ENCODE measurements at regions of chr9 and their contacts with region 1.

Region 1: GRCh38 chr9:27618066-27618465 is 44.8 kb upstream of the C9orf72 start:
- DNase-seq: no peak
- ATAC-seq: no peak
- H3K4me3 ChIP-seq: no peak overlapping the region
- H3K4me3 Mint-ChIP-seq: no peak overlapping the region
- H3K27ac ChIP-seq: no peak overlapping the region
- H3K27ac Mint-ChIP-seq: no peak overlapping the region
- H3K4me1 ChIP-seq: no peaks in the 10 kb centered on the region
- H3K4me1 Mint-ChIP-seq: no peaks in the 10 kb centered on the region
- H3K27me3 ChIP-seq: no peaks in the 10 kb centered on the region
- H3K27me3 Mint-ChIP-seq: peaks cover 0 to 5% of the 10 kb centered on the region in 2 donors
- CTCF ChIP-seq: no peak

Region 2: DNA sequence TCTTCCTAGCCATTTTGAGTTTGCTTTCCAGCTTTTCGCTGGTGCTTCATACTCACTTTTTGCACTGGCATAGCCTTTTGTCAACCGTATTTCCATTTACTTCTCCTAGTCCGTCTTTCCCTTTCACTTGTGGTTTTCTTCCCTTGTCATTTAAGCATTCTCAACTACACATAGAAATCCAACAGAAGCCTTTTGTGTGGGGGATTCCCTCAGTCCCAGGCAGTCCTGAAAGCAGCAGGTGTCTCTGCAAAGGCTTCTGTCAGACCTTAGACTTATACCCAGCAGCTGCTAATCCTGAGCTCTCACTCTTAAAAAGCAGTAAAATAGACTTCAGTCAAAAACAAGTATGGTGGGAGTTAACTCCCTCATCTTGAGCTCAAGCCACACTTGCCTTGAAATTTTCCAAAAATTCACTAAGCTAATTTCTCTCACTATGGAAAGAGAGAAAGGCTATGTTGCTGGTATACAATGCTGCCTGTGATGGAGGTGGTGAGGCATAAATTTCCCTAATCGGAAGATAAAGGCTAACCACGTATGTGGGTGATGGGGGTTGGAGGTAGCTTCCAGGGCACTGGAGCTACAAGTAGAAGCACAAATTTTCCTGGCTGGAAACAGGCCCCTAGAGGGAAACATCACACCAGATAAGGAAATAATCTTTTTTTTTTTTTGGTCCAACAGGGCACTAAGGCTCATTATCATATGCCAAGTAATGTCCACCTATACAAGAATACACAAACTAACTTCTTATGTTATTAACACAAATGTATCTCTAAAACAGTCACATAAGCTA is 128.8 kb before region 1 on chr9:
- intact Hi-C with region 1: no loop called
- DNase-seq: no peak
- ATAC-seq: no peak
- H3K4me3 ChIP-seq: no peak overlapping the region
- H3K4me3 Mint-ChIP-seq: no peak overlapping the region
- H3K27ac ChIP-seq: no peak overlapping the region
- H3K27ac Mint-ChIP-seq: no peak overlapping the region
- H3K4me1 ChIP-seq: peaks cover 10% of the 10 kb centered on the region
- H3K4me1 Mint-ChIP-seq: peaks cover 15 to 17% of the 10 kb centered on the region in 2 donors
- H3K27me3 ChIP-seq: no peaks in the 10 kb centered on the region
- H3K27me3 Mint-ChIP-seq: peaks cover 0 to 3% of the 10 kb centered on the region in 2 donors
- CTCF ChIP-seq: no peak

Region 3: DNA sequence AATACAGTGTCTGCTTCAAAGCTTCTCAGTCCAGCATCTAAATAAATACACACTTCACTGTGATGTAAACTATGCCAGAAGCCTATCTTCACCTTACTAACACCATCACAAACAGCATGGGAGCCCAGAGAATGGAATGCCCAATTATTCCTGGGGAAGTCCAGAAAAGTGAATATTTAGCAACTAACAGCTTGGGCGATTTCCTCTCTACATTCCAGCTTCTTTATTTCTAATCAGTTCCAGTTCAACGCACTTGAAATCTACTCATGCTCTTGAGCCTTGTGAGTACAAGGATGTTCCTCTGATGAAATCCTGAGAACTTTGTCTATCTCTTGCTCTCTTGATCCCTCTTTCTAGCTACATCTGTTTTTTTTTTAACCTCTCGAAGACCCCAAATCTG is 55.6 kb after region 1 on chr9:
- intact Hi-C with region 1: loop called (anchors 10 kb)
- DNase-seq: no peak
- ATAC-seq: no peak
- H3K4me3 ChIP-seq: no peak overlapping the region
- H3K4me3 Mint-ChIP-seq: no peak overlapping the region
- H3K27ac ChIP-seq: no peak overlapping the region
- H3K27ac Mint-ChIP-seq: no peak overlapping the region
- H3K4me1 ChIP-seq: peaks cover 14% of the 10 kb centered on the region
- H3K4me1 Mint-ChIP-seq: peaks cover 0 to 5% of the 10 kb centered on the region in 2 donors
- H3K27me3 ChIP-seq: no peaks in the 10 kb centered on the region
- H3K27me3 Mint-ChIP-seq: peaks cover 0 to 3% of the 10 kb centered on the region in 2 donors
- CTCF ChIP-seq: no peak

Measured in natural killer cell (primary cell).